A673 (cell line): ENCODE measurements at regions of chr2 and their contacts with region 1.

Region 1: GRCh38 chr2:152617456-152618192 is 99.6 kb downstream of the PRPF40A start:
- DNase-seq: no peak
- H3K4me3 ChIP-seq: no peak overlapping the region
- H3K27ac ChIP-seq: no peak overlapping the region
- H3K4me1 ChIP-seq: no peaks in the 10 kb centered on the region
- H3K27me3 ChIP-seq: no peaks in the 10 kb centered on the region
- CTCF ChIP-seq: no peak

Region 2: DNA sequence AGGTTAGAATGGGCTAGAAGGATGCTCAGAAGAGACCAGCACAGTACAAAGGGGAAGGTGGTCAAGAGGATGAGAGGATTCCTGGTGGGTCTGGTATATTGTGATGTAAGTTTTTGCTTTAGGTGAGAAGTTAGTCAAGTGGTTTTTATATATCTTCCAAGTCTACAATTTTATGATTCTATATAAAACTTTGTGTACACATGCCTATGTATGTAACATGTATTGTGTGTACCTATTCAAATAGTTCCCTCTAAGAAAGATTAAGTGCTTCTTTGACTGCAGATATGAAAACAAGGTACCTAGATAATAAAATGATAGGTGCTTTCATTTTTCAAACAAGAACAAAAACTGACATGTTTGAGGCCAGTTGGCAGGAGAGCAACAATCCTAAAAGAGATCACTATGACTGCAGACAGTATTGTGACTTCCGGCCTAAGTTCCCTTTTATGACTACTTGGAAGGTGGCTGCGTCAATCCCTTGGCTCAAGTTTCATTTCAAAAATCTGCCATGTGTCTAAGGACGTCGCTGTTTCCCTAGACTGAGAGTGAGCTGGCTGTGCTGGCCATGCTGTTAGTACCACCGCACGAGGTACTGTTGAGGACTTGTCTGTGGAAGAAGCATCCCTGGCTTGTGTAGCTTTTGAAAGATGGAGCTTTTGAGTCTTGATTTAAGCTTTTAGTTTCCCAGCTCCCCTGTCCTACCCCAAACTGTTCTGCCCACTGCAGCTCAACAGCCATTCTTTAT is 23.4 kb before region 1 on chr2:
- CTCF ChIA-PET with region 1: no interaction called
- POLR2A ChIA-PET with region 1: no interaction called
- intact Hi-C with region 1: loop called (anchors 1 kb)
- DNase-seq: no peak
- H3K4me3 ChIP-seq: no peak overlapping the region
- H3K27ac ChIP-seq: no peak overlapping the region
- H3K4me1 ChIP-seq: no peaks in the 10 kb centered on the region
- H3K27me3 ChIP-seq: no peaks in the 10 kb centered on the region
- CTCF ChIP-seq: no peak